BJ (cell line): ENCODE measurements at regions of chr17 and their contacts with region 1.

Region 1: GRCh38 chr17:996554-997344 is at the start of gene TIMM22:
- DNase-seq: peak; percentile 78
- H3K4me3 ChIP-seq: peak within 1 kb of the TSS; percentile 100
- H3K27me3 ChIP-seq: no peaks in the 10 kb centered on the region
- CTCF ChIP-seq: peak; percentile 88
- polyA plus RNA-seq, gene TIMM22: 12.6 and 14.3 TPM in 2 replicates

Region 2: DNA sequence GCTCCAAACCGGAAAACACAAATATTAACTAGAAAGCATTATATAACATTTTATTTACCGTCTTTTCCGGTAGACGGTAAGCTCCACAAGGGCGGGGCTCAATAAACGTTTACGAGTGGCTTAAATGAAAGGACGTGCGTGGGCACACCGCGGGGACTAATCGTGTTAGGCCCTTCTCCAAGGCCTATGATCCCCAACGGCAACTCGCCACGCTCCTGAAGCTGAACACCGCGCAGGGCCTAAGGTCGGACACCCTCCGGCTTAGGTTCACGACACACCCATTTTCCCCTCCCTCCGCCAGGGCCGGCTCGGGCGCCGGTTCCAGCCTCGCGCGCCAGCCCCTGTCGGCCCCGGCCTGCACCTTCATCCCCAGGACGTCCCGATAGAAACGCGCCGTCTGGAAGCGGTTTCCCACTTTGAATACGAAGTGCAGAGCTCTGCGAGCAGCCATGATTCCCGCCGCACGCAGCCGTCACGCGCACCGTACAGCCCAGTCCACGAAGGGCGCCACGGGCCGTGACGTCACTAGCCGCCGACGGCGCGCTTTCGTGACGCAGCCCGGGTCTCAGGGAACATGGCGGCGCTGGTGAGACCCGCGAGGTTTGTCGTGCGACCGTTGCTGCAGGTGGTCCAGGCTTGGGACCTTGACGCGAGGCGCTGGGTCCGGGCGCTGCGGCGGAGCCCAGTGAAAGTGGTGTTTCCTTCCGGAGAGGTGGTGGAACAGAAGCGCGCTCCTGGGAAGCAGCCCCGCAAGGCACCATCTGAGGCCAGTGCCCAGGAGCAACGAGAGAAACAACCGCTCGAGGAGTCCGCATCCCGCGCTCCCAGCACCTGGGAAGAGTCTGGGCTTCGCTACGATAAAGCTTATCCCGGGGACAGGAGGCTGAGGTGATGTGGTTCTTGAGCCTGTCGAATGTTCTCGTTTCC is 214.7 kb before region 1 on chr17 and contains the starts of genes GLOD4 and MRM3:
- CTCF ChIA-PET with region 1: interaction called, 12 read pairs
- POLR2A ChIA-PET with region 1: no interaction called
- DNase-seq: peak; percentile 48
- H3K4me3 ChIP-seq: peak within 1 kb of the TSS; percentile 96
- H3K27me3 ChIP-seq: no peaks in the 10 kb centered on the region
- CTCF ChIP-seq: peak; percentile 21; the same call in 1 of the 2 replicates
- polyA plus RNA-seq, gene GLOD4: 15.8 and 28.3 TPM in 2 replicates
- polyA plus RNA-seq, gene MRM3: 9.8 and 10.1 TPM in 2 replicates

Region 3: DNA sequence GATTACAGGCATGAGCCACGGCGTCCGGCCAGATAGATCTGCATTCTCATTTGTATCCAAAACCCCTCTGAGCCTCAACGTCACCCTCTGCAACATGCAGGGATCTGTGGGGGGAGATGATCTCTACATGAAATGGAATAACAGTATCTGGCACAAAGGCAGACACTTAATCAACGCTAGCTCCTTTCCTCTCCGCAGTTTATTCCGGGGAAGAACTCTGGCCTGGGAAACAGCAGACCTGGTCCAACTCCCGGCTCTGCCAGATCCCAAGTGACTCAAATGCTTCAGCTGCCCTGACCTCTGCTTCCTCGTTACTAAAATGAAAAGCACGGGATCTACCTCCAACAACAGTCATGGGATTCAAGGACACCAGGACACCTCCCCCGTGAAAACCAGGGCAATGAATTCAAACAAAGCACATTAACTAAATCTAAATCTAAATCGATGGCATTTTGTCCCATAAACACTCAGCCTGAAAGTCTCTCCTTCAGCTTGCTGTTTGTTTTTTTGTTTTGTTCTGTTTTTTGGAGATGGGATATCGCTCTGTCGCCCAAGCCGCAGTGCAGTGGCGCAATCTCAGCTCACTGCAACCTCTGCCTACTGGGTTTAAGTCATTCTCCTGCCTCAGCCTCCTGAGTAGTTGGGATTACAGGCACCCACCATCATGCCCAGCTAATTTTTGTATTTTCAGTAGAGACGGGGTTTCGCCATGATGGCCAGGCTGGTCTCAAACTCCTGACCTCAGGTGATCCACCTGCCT is 95.4 kb before region 1 on chr17:
- CTCF ChIA-PET with region 1: interaction called, 5 read pairs
- POLR2A ChIA-PET with region 1: interaction called, 10 read pairs
- DNase-seq: no peak
- H3K4me3 ChIP-seq: no peak overlapping the region
- H3K27me3 ChIP-seq: no peaks in the 10 kb centered on the region
- CTCF ChIP-seq: no peak

Region 4: DNA sequence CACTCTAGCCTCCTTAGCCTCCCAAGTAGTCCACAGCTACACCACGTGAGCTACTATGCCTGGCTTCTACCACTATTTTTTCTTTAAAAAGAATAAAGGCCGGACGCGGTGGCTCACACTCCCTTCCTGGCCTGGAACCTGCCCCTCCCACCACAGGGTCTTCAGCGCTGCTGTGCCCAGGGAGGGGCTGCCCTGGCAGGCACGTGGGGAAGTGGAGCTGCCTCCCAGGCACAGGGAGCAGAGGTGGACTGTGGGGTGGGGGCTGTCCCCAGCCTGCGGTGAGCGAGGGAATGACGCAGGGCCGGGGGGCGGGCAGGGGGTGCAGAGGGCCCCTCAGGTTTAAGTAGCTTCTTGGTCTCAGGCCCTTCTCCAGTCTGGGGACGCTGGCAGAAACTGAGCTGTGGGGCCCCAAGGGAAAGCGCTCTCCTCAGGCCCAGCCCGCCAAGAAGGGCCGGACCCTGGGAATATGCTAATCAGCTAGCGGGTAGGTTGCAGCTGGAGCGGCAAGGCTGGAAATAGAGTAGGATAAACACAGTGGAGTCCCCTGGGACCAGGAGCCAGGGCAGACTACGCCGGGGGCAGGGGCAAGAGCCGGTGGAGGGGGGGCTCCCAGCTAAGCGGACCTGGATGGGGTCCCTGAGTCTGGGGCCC is 47.0 kb after region 1 on chr17:
- CTCF ChIA-PET with region 1: no interaction called
- POLR2A ChIA-PET with region 1: no interaction called
- DNase-seq: no peak
- H3K4me3 ChIP-seq: no peak overlapping the region
- H3K27me3 ChIP-seq: no peaks in the 10 kb centered on the region
- CTCF ChIP-seq: no peak